ENCODE measurements at regions of chr9 and their contacts with region 1.

Region 1: GRCh38 chr9:79902825-79903600 is 331.2 kb downstream of the TLE4 start:
- DNase-seq: no peak
- ATAC-seq: no peak
- H3K4me3 ChIP-seq: no peak overlapping the region
- H3K27ac ChIP-seq: no peak overlapping the region
- H3K4me1 ChIP-seq: no peaks in the 10 kb centered on the region
- H3K27me3 ChIP-seq: no peaks in the 10 kb centered on the region
- CTCF ChIP-seq: no peak
- POLR2A ChIP-seq: no peak

Region 2: GRCh38 chr9:79432485-79432884 is 470.5 kb before region 1 on chr9:
- in situ Hi-C with region 1: no loop called
- intact Hi-C with region 1: no loop called
- DNase-seq: no peak
- ATAC-seq: no peak
- H3K4me3 ChIP-seq: no peak overlapping the region
- H3K27ac ChIP-seq: no peak overlapping the region
- H3K4me1 ChIP-seq: no peaks in the 10 kb centered on the region
- H3K27me3 ChIP-seq: no peaks in the 10 kb centered on the region
- CTCF ChIP-seq: no peak
- POLR2A ChIP-seq: no peak

Region 3: GRCh38 chr9:79939819-79940218 is 36.8 kb after region 1 on chr9:
- in situ Hi-C with region 1: no loop called
- intact Hi-C with region 1: loop called (anchors 1 kb)
- DNase-seq: no peak
- ATAC-seq: no peak
- H3K4me3 ChIP-seq: no peak overlapping the region
- H3K27ac ChIP-seq: no peak overlapping the region
- H3K4me1 ChIP-seq: peaks cover 0 to 6% of the 10 kb centered on the region in 2 donors
- H3K27me3 ChIP-seq: no peaks in the 10 kb centered on the region
- CTCF ChIP-seq: no peak
- POLR2A ChIP-seq: no peak

Region 4: GRCh38 chr9:79975621-79976256 is 72.7 kb after region 1 on chr9:
- in situ Hi-C with region 1: no loop called
- intact Hi-C with region 1: no loop called
- DNase-seq: peak; percentile 87
- ATAC-seq: peak; percentile 87 to 88
- H3K4me3 ChIP-seq: peak overlapping the region; percentile 5 to 44 (median 32)
- H3K27ac ChIP-seq: peak overlapping the region; percentile 78 to 89 (median 82)
- H3K4me1 ChIP-seq: peaks cover 16 to 31% of the 10 kb centered on the region in 2 donors
- H3K27me3 ChIP-seq: no peaks in the 10 kb centered on the region
- CTCF ChIP-seq: peak in 2 of 5 experiments; percentile 36 to 49
- POLR2A ChIP-seq: no peak

Measured in gastrocnemius medialis (tissue), 4 donors.